Left cardiac atrium (tissue), 4 donors: ENCODE measurements at regions of chr3 and their contacts with region 1.

Region 1: GRCh38 chr3:12663936-12664908 is at the start of gene RAF1:
- DNase-seq: peak; percentile 98
- ATAC-seq: peak; percentile 95 to 97
- total RNA-seq, gene RAF1: 109 to 116 TPM

Region 2: DNA sequence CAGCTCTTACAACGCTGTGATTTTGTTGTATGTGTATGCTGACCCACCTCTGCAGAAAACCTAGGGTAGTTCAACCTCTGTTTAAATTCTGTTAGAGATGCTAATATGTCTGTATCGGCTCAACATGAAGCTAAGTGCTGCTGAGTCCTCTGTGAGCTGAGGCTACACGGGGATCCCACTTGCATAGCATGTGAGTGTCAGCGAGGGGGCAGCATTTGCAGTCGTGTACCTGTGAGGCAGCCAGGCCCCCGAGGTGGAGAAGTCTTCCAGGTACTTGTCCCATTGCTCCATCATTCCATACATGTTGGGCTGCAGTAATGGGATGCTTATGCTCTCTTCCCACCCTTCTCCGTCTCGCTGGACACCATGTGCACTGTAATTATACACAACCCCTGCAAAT is 122.6 kb before region 1 on chr3:
- intact Hi-C with region 1: no loop called
- DNase-seq: peak; percentile 27
- ATAC-seq: peak in 1 of 2 donors; percentile 52

Region 3: DNA sequence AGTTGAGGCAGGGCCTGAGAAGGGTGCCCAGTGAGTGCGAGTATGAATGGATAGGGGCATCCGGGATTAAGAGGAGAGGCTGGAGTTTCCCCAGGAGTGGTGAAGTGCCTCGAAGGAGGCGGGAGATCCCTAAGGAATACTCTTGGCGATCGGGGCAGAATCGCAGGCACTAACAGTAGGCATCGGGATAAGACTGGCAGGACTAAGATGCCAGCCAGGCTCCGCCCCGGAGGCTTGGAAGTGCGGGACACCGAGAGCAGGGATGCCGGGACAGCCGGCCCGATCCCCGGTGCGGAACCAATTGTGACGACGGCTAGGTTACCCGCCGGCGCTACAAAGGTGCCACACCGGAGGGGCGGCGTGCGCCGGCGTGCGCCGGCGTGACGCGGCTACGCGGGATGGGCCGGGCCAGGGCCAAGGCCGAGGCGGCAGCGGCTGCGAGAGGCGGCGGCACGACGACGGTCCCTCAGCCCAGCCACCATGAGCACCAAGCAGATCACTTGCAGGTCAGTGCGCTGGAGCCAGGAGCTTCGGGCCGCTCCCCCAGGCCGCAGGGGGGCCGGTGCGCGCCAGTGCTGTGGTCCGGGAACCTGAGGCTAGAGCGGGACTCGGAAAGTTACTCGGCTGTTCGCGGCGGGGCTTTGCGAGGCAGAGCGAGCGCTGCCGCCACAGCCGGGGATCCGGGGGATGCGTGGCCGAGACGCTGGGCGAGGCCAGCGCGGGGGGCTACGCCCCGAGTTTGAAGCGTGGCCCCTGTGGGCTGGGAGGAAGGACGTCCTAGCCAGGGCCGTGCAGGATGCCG is 107.3 kb before region 1 on chr3 and contains the start of gene MKRN2:
- intact Hi-C with region 1: loop called (anchors 5 to 10 kb)
- DNase-seq: peak; percentile 89
- ATAC-seq: peak; percentile 97 to 98
- total RNA-seq, gene MKRN2: 23.9 to 31.7 TPM

Region 4: DNA sequence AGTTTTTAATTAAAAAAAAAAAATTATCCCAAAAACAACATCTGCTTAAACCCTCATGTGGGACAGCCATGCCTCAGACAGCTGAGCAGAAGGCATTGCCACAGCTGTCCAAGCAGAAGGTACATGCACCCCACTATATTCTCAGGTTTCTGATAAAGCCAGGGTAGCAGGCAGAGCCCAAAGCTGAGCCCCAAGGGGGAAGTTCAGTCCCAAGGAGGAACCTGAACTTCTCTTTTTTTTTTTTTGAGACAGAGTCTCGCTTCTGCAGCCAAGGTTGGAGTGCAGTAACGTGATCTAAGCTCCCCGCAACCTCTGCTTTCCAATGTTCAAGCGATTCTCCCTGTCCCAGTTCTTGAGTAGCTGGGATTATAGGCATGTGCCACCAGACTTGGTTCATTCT is 74.1 kb before region 1 on chr3:
- intact Hi-C with region 1: loop called in 1 of 2 experiments (anchors 5 kb)
- DNase-seq: no peak
- ATAC-seq: no peak

Region 5: GRCh38 chr3:12706504-12707253 is 42.5 kb after region 1 on chr3:
- intact Hi-C with region 1: no loop called
- DNase-seq: peak; percentile 41
- ATAC-seq: peak; percentile 82 to 86

Region 6: DNA sequence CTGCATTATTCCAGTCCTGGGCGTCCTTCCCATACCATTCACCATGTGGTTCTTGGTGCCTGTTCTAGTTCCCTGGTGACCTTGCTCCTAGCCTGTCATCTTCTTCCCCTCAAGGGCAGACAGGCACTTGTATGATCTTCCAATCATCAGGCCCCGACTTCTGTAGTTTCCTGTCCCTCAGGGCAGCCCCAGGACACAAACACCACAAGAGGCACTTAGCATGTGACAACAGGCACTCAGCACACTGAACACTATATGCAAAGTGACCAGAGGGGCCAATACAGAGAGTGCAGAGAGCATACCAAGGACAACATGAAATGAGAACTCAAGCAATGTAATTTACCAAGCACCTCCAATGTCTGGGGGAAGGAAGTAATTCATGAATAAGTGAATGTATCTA is 77.0 kb after region 1 on chr3:
- intact Hi-C with region 1: no loop called
- DNase-seq: no peak
- ATAC-seq: peak; percentile 56 to 72